HEK293 (cell line): ENCODE measurements at regions of chr3 and their contacts with region 1.

Region 1: DNA sequence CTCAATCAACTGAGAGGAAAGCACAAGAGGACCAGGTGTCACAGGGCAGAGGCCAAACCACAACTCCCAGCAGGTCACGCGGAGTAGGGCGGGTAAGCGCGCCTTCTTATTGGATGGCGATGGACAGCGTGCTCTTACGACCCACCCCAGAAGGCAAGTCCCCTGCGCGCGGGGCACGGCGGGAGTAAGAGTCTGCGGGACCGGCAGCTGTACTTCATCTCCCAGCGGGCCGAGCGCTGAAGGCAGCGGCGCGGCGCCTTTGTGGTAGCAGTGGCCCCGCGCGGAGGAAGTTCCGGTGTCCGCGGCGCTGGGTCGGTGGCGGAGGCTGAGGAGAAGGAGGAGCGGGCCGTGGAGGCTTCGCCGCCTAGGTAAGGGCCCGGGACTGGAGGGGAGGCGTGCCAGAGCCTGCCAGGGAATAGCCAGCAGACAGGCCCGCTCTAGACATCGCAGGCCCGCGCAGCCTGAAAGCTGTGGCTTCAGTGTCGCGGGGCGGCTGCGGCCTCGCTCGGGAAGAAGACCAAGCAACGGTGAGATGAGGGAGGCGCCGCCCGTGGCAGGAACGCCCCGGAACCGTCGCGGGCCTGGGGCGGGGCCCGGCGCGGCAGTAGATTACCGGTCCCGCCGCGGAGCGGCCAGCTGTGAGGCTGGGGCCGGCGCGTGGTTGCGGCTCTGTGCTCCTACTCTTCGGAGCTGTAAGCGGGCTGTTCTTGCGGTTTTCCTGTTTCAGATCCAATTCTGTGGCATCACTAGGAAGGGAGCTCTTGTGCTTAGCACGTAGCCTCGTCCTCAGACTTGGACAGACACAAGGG is at the start of gene RBM6:
- H3K4me3 ChIP-seq: peak within 1 kb of the TSS; percentile 99
- H3K27ac ChIP-seq: peak within 1 kb of the TSS; percentile 81
- H3K4me1 ChIP-seq: no peaks in the 10 kb centered on the region
- CTCF ChIP-seq: peak; percentile 71

Region 2: GRCh38 chr3:49929331-49930240 is 10.5 kb before region 1 on chr3 and contains the start of gene MON1A:
- CTCF ChIA-PET with region 1: interaction called, 3 read pairs
- POLR2A ChIA-PET with region 1: interaction called, 43 read pairs
- H3K4me3 ChIP-seq: peak within 1 kb of the TSS; percentile 82
- H3K27ac ChIP-seq: peak within 1 kb of the TSS; percentile 32; the same call in 1 of the 2 replicates
- H3K4me1 ChIP-seq: no peaks in the 10 kb centered on the region; the same call in 1 of the 2 replicates
- CTCF ChIP-seq: peak; percentile 62; the same call in 1 of the 2 replicates

Region 3: DNA sequence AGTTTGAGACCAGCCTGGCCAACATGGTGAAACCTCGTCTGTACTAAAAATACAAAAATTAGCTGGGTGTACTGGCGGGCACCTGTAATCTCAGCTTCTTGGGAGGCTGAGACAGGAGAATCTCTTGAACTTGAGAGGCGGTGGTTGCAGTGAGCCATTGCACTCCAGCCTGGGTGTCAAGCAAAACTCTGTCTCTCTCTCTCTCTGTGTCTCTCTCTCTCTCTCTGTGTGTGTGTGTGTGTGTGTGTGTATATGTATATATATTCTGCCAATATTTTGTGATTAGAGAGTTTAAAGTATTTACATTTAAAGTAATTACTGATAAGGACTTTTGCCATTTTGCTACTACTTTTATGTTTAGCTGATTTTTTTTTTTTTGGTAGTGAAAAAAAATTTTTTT is 15.6 kb after region 1 on chr3:
- CTCF ChIA-PET with region 1: no interaction called
- POLR2A ChIA-PET with region 1: interaction called, 11 read pairs
- H3K4me3 ChIP-seq: no peak overlapping the region
- H3K27ac ChIP-seq: no peak overlapping the region
- H3K4me1 ChIP-seq: 0 out of 2 replicates have a peak, but pooled peaks cover 3% of the 10 kb centered on the region
- CTCF ChIP-seq: no peak